ENCODE measurements at regions of chr18 and their contacts with region 1.

Region 1: GRCh38 chr18:864872-865273 is 39.8 kb upstream of the ADCYAP1 start:
- DNase-seq: peak; percentile 38 to 63
- ATAC-seq: peak; percentile 87

Region 2: DNA sequence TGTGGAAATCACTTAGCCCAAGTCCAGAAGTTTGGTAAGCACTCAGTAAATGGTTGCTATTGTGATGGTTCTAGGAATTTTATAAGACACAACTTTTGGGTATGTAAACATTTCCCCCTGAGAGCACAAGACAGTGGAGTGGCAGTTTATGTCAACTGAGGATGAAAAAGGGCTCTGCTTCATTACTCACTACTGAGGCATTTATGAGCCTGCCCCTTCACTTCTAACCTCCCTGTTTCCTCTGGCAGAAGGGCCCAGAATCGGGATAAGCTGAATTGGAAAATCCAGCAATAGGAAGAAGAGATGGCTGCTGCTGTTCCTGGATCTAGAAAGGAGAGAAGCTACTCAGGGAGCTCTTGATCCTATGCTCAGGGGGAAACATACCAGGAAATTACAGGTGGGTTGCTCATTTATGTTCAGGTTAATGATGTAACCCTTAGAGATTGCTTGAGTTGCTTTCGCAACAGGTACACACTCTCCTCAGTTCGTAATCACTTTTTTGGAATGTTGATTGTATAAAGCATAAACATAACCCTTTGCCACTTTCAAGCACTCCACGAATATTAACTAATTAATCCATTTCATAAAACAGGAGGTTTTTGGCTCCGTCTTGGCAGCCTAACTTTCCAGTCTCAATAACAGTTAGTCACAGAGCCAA is 86.1 kb after region 1 on chr18:
- intact Hi-C with region 1: loop called in 1 of 2 experiments (anchors 10 kb)
- DNase-seq: no peak
- ATAC-seq: no peak

Measured in left colon (tissue), 2 donors.